MCF 10A (cell line): ENCODE measurements at regions of chr5 and their contacts with region 1.

Region 1: GRCh38 chr5:150544611-150545219 is 36.8 kb downstream of the NDST1 start:
- DNase-seq: peak; percentile 91
- H3K4me3 Mint-ChIP-seq: no peak overlapping the region
- H3K27ac Mint-ChIP-seq: no peak overlapping the region
- H3K4me1 Mint-ChIP-seq: peaks cover 26% of the 10 kb centered on the region
- H3K27me3 Mint-ChIP-seq: no peaks in the 10 kb centered on the region
- CTCF ChIP-seq: peak; percentile 99

Region 2: DNA sequence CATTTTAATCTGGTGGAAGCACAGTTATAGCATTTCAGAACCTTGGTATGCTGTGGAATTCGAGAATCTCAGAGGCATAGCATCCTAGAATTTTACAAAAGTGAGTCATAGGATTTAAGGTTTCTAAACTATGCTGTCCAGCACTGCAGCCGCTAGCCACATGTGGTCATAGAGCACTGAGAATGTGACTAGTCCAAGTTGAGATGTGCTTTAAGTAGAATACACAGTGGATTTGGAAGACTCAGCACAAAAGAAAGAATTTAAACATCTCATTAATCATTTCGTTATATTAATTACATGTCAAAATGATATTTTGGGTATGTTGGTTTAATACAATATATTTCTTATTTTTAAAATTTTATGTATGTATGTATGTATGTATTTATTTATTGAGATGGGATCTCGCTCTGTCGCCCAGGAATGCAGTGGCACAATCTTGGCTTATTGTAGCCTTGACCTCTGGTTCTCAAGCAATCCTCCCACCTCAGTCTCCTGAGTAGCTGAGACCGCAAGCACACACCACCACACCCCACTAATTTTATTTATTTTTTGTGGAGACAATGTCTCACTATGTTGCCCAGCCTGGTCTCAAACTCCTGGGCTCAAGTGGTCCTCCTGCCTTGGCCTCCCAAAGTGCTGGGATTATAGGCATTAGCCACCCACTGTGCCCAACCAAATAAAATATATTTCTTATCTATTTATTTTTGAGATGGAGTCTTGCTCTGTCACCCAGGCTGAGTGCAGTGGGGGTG is 74.8 kb before region 1 on chr5:
- CTCF ChIA-PET with region 1: interaction called, 6 read pairs
- POLR2A ChIA-PET with region 1: interaction called, 6 read pairs
- intact Hi-C with region 1: loop called (anchors 2 kb)
- DNase-seq: peak; percentile 81
- H3K4me3 Mint-ChIP-seq: no peak overlapping the region
- H3K27ac Mint-ChIP-seq: no peak overlapping the region
- H3K4me1 Mint-ChIP-seq: peaks cover 24% of the 10 kb centered on the region
- H3K27me3 Mint-ChIP-seq: no peaks in the 10 kb centered on the region
- CTCF ChIP-seq: no peak

Region 3: GRCh38 chr5:150497274-150497988 is 47.3 kb before region 1 on chr5:
- CTCF ChIA-PET with region 1: interaction called, 9 read pairs
- POLR2A ChIA-PET with region 1: interaction called, 26 read pairs
- intact Hi-C with region 1: no loop called
- DNase-seq: peak; percentile 99
- H3K4me3 Mint-ChIP-seq: peak overlapping the region; percentile 70
- H3K27ac Mint-ChIP-seq: peak overlapping the region; percentile 94
- H3K4me1 Mint-ChIP-seq: peaks cover 83% of the 10 kb centered on the region
- H3K27me3 Mint-ChIP-seq: no peaks in the 10 kb centered on the region
- CTCF ChIP-seq: peak; percentile 11

Region 4: DNA sequence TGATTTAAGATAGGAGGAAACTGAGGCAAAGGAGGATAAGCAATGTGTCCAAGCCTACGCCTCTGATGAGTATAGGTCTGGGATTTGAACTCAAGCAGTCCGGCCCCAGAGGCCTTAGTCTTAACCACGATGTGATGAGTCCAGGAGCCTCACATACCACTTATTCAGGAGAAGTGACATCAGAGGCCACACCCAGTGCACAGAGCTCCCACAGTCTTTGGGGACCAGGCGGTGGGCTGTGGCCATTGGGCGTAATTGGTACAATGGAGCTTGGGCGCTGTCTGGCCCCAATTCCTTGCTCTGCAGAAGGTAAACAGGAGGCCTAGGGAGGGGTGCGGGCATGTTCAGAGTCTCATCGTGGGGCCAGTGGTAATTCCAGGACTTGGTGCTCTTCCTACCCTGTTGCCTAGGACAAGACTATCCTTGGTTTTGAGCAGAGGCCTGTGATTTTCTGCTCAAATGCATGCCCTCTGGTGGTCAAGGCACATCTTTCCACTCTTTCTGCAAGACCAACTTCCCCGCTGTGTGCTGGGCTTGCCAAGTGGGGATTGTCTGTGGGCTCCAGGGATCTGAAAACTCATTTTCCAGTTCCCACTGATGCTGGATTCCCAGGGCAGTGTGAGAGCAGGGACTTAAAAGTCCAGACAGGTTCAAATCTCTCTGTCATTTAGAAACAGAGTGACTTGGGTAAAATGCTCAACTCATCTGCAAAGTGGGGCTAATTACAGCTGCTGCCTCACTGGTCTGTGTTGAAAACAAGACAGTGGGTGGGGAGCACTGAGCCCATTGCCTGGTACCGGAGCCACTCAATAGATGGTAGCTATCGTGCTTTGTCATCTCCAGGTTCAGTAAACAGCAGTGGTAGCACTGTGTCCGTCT is 21.0 kb before region 1 on chr5:
- CTCF ChIA-PET with region 1: interaction called, 33 read pairs
- POLR2A ChIA-PET with region 1: interaction called, 10 read pairs
- intact Hi-C with region 1: no loop called
- DNase-seq: peak; percentile 81
- H3K4me3 Mint-ChIP-seq: no peak overlapping the region
- H3K27ac Mint-ChIP-seq: no peak overlapping the region
- H3K4me1 Mint-ChIP-seq: peaks cover 43% of the 10 kb centered on the region
- H3K27me3 Mint-ChIP-seq: no peaks in the 10 kb centered on the region
- CTCF ChIP-seq: peak; percentile 85

Region 5: DNA sequence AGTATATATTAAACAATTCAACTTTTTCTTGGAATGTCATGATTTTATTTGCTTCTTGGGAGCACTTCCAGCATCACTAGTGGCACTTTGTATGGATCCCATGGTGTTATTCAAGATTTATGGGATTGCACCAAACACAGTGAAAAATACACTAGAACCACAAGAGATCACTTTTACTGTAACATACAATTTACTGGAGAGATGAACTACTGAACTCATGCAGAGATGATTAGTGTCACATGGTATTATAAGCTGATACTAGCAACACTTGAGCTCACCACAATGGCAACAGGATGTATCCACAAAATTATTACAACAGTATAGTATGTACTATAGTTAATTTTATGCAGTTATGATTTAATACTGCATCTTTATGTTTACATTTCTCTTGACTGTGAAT is 819.0 kb after region 1 on chr5:
- CTCF ChIA-PET with region 1: no interaction called
- POLR2A ChIA-PET with region 1: no interaction called
- intact Hi-C with region 1: no loop called
- DNase-seq: no peak
- H3K4me3 Mint-ChIP-seq: no peak overlapping the region
- H3K27ac Mint-ChIP-seq: no peak overlapping the region
- H3K4me1 Mint-ChIP-seq: no peaks in the 10 kb centered on the region
- H3K27me3 Mint-ChIP-seq: peaks cover 12% of the 10 kb centered on the region
- CTCF ChIP-seq: no peak